A673 (cell line): ENCODE measurements at regions of chr17 and their contacts with region 1.

Region 1: DNA sequence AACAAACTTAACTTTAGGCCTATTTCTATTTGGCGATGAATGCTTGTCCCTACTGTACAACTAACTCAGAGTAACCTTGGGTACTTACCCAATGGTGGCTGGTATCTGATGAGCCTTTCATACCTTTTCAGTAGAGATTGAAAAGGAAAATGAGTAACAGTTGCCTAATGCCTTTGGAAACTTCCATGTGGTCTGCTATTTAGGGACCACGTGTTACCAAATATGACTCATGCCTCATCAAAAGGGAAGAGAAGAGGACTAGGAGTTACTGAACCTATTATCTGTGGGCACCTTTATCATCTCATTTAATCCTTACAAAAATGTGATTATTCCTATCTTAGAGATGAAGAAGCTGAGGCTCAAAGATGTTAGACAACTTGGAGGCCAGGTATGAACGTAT is 8.1 kb downstream of the MYOCD start:
- DNase-seq: no peak
- H3K4me3 ChIP-seq: no peak overlapping the region
- H3K27ac ChIP-seq: no peak overlapping the region
- H3K4me1 ChIP-seq: no peaks in the 10 kb centered on the region
- H3K27me3 ChIP-seq: peaks cover 11% of the 10 kb centered on the region
- CTCF ChIP-seq: no peak

Region 2: DNA sequence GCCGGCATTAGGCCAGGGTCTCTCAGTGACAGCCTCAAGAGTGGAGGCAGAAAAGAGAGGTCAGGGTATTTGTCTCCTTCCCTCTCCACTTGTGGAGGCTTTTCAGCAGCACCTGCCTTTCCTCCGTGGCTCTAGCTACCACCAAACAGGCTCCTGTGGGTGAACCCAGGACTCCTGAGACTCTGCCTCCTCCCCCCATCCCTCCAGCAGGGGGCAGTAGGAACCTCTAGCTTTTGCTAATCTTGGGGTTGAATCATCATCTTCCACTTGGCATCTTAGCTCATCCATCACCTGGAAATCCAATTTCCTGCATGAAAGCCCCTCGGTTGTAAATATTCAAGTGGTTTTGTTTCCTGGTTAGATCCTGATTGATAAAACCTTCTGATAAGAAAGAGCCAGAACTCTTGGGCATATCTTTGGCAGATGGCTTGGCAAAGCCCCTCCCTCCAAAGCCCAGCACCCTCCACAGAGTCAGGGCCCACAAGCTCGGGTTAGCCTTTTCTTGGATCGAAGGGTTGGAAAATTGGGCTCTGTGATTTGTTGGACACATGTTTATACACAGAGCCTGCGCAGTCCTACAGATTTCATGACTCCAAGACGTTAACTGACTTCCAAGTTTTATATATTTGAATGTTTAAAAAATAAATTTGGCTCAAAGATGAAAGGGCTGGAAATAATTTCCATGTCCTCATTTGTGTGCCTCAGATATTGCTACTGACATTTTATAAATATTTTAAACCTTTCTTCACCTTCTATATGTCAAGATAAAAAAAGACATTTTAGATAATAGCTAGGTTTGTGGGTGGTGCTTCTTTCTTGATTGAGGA is 331.0 kb before region 1 on chr17:
- CTCF ChIA-PET with region 1: no interaction called
- POLR2A ChIA-PET with region 1: no interaction called
- intact Hi-C with region 1: loop called (anchors 10 kb)
- DNase-seq: peak; percentile 54
- H3K4me3 ChIP-seq: no peak overlapping the region
- H3K27ac ChIP-seq: no peak overlapping the region
- H3K4me1 ChIP-seq: no peaks in the 10 kb centered on the region
- H3K27me3 ChIP-seq: no peaks in the 10 kb centered on the region
- CTCF ChIP-seq: peak; percentile 69

Region 3: GRCh38 chr17:12659500-12659899 is 14.3 kb before region 1 on chr17:
- CTCF ChIA-PET with region 1: no interaction called
- POLR2A ChIA-PET with region 1: no interaction called
- intact Hi-C with region 1: no loop called
- DNase-seq: no peak
- H3K4me3 ChIP-seq: no peak overlapping the region
- H3K27ac ChIP-seq: no peak overlapping the region
- H3K4me1 ChIP-seq: no peaks in the 10 kb centered on the region
- H3K27me3 ChIP-seq: peaks cover 26% of the 10 kb centered on the region
- CTCF ChIP-seq: no peak